BJ (cell line): ENCODE measurements at regions of chr17 and their contacts with region 1.

Region 1: DNA sequence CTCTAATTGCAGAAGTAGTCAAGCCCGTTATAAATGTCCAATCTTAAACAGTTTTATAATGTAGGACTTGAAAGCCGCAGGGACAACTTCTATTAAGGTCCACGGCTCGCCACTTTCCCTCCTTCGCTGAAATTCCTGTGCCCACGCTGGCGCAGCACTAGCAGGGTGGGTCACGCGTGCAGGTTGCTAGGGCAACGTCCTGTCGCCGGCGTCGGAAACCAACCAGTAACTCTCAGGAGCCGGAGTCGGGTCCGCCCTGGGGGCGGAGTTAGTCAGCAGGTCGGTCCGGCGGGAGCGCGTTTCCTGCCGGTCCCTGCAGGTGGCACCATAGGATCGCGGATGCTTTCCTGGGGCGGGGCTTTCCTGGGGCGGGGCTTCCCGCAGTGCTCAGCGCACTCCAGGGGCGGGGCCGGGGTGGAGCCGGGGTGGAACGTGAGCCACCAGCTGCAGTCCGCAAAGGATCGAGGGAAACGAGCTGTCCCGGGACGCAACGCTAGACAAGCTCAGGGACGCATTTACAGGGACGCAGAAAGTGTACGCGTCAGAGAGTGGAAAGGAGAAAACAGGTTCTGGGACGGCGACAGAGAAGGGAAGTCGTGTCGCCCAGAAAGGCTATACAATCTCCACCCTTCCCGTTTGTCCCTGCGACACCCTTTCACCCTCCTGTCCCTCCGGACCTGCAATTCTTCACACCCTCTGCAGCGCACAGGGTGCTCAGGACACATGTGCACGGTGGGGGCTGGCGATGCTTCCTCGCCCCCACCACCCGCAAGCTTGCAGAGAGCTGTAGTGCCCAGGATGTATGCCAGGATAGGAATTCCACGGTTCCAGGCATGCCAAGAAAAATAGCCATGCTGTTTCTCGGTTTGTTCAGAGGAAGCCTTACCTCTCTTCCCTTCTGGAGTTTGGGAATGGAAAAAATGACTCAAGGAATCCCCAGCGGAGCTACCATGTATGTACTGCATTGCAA is 12.4 kb downstream of the COPZ2 start:
- DNase-seq: peak; percentile 84
- H3K4me3 ChIP-seq: peak overlapping the region; percentile 42
- H3K27me3 ChIP-seq: no peaks in the 10 kb centered on the region
- CTCF ChIP-seq: peak; percentile 90

Region 2: DNA sequence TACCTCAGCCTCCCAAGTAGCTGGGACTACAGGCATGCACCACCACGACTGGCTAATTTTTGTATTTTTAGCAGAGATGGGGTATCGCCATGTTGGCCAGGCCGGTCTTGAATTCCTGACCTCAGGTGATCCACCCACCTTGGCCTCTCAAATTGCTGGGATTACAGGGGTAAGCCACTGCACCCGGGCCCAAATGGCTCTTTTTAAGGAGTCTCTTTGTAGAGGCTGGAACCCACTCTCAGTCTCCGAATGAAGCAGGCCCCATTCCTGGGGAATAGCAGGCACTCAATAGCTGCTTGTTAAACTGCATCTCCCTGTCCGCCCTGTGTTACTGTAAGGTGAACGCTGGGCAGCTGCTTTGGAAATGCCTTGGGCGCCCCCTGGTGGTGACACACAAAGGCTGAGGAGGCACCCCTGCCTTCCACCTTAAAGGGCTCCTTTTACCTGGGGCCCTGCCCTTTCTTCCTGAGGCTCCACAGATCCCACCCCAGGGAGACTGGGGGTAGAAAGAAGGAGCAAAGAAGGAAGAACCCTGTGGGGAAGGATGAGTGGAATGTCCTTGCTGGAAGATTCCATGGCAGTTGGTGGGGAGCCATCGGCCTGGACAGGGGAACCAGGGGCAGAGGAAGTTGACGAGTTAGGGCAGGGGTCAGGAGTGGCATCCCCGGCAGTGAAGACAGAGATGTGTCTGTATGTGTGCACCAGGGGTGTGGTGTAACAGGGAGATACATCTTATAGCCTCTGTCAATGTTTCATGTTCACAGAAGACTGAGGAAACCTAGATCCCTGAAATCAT is 135.3 kb before region 1 on chr17:
- CTCF ChIA-PET with region 1: no interaction called
- POLR2A ChIA-PET with region 1: no interaction called
- DNase-seq: no peak
- H3K4me3 ChIP-seq: no peak overlapping the region
- H3K27me3 ChIP-seq: no peaks in the 10 kb centered on the region
- CTCF ChIP-seq: peak; percentile 94

Region 3: GRCh38 chr17:48011405-48012150 is 13.6 kb before region 1 on chr17:
- CTCF ChIA-PET with region 1: interaction called, 12 read pairs
- POLR2A ChIA-PET with region 1: no interaction called
- DNase-seq: no peak
- H3K4me3 ChIP-seq: peak overlapping the region; percentile 40
- H3K27me3 ChIP-seq: no peaks in the 10 kb centered on the region; the same call in 1 of the 2 replicates
- CTCF ChIP-seq: peak; percentile 74

Region 4: DNA sequence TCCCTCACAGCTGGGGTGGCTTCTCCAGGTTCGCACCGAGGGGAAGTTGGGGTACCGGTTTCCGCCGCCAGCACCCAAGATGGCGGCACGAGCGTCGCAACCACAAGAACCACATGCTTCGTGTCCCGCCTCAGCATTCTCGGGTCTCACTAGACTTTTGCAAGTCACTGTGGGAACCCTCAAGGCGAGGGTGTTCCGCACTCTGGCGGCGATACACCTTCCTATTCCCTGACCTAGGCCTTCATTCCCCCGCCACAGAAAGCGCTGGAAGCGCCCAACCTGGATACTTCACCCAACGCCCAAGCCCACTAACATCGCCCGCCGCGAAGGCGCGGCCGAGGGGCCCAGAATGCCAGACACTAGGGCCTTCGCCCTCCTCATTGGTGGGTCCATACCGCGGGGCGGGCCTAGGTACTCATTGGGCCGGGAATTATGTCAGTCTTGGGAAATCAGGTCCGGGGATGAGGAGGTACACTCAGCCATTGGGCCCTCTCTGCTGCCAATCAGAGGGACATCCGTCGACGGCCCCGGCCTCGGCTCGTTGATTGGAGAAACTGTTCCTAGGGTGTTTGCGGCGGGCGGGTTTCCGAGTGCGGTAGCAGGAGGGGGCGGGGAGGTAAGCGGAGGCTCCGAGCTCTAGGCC is 22.6 kb after region 1 on chr17 and contains the start of gene NFE2L1:
- CTCF ChIA-PET with region 1: interaction called, 44 read pairs
- POLR2A ChIA-PET with region 1: interaction called, 3 read pairs
- DNase-seq: peak; percentile 98
- H3K4me3 ChIP-seq: peak within 1 kb of the TSS; percentile 79
- H3K27me3 ChIP-seq: no peaks in the 10 kb centered on the region
- CTCF ChIP-seq: no peak
- polyA plus RNA-seq, gene NFE2L1: 255 and 281 TPM in 2 replicates

Region 5: GRCh38 chr17:48068491-48068961 is 43.3 kb after region 1 on chr17:
- CTCF ChIA-PET with region 1: interaction called, 200 read pairs
- POLR2A ChIA-PET with region 1: interaction called, 3 read pairs
- DNase-seq: peak; percentile 32
- H3K4me3 ChIP-seq: no peak overlapping the region
- H3K27me3 ChIP-seq: no peaks in the 10 kb centered on the region
- CTCF ChIP-seq: peak; percentile 45

Region 6: DNA sequence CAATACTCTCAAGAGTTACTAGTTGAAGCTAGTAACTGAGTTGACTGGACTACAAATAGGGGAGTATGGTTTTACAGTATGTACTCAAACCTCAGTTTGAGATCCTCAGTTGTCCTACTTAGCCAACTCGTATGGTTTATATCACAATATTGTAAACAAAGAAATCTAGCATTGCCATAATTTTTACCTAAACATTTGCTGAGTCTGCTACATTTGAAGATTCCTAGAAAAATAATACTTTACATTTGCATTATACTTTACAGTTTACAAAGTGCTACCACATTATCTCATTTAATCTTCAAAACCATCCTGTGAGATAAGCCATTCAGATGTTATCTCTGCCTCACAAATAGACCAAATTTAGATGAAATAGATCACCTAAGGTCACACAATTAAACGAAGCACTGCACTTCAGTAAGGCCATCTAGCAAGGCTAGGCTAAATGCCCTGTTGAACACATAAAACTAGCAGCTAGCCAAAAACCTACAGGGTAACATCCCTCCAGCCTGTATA is 59.8 kb after region 1 on chr17:
- CTCF ChIA-PET with region 1: interaction called, 200 read pairs
- POLR2A ChIA-PET with region 1: no interaction called
- DNase-seq: no peak
- H3K4me3 ChIP-seq: no peak overlapping the region
- H3K27me3 ChIP-seq: no peaks in the 10 kb centered on the region
- CTCF ChIP-seq: no peak

Region 7: GRCh38 chr17:48101012-48101720 is 75.9 kb after region 1 on chr17 and contains the start of gene CBX1:
- CTCF ChIA-PET with region 1: interaction called, 30 read pairs
- POLR2A ChIA-PET with region 1: no interaction called
- DNase-seq: peak; percentile 65
- H3K4me3 ChIP-seq: peak within 1 kb of the TSS; percentile 96
- H3K27me3 ChIP-seq: no peaks in the 10 kb centered on the region
- CTCF ChIP-seq: no peak
- polyA plus RNA-seq, gene CBX1: 20.7 and 40.4 TPM in 2 replicates